Activated CD4-positive, alpha-beta T cell treated with anti-CD3 and anti-CD28 coated beads for 36 hours (primary cell): ENCODE measurements at regions of chr10 and their contacts with region 1.

Region 1: GRCh38 chr10:99435986-99436638 is 5.7 kb upstream of the GOT1 start:
- DNase-seq: no peak
- ATAC-seq: peak; percentile 60
- H3K4me3 Mint-ChIP-seq: no peak overlapping the region
- H3K27ac Mint-ChIP-seq: no peak overlapping the region
- H3K4me1 Mint-ChIP-seq: peaks cover 14% of the 10 kb centered on the region
- H3K27me3 Mint-ChIP-seq: no peaks in the 10 kb centered on the region

Region 2: GRCh38 chr10:99357691-99358090 is 78.4 kb before region 1 on chr10:
- CTCF ChIA-PET with region 1: no interaction called
- POLR2A ChIA-PET with region 1: no interaction called
- intact Hi-C with region 1: no loop called
- DNase-seq: no peak
- ATAC-seq: no peak
- H3K4me3 Mint-ChIP-seq: no peak overlapping the region
- H3K27ac Mint-ChIP-seq: no peak overlapping the region
- H3K4me1 Mint-ChIP-seq: no peaks in the 10 kb centered on the region
- H3K27me3 Mint-ChIP-seq: peaks cover 10% of the 10 kb centered on the region

Region 3: DNA sequence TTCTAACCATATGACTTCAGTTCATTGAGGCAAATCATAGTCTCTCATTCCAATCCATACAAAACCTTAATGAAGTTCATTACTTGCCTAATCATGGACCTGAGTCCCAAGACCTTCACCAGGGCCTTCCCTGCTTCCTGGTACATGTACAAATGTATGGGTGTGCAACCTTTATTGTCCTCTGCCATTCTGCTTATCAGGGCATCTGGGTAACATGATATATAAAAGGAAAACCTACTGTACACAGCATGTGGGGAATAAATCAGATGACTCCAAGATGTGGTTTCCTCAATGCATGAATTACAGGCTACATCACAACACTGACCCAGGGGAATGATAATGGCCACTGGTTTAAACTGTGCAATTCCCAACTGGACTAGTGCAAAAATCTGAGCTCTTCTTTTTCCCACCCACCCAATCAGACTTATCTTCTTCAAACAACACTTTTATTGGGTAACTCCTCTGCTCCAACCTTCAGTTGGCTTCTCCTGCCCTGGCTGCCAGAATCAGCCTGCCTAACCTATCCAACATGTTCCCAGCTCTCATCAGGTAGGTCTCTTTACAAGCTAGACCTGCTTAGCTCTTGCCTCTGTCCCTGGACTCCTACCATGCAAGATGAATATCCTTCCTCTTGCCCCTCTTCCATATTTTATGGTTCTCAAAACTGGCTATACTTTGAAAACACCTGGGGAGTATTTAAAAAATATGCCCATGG is 17.0 kb before region 1 on chr10:
- CTCF ChIA-PET with region 1: interaction called, 11 read pairs
- POLR2A ChIA-PET with region 1: no interaction called
- intact Hi-C with region 1: no loop called
- DNase-seq: no peak
- ATAC-seq: no peak
- H3K4me3 Mint-ChIP-seq: no peak overlapping the region
- H3K27ac Mint-ChIP-seq: no peak overlapping the region
- H3K4me1 Mint-ChIP-seq: no peaks in the 10 kb centered on the region
- H3K27me3 Mint-ChIP-seq: no peaks in the 10 kb centered on the region

Region 4: DNA sequence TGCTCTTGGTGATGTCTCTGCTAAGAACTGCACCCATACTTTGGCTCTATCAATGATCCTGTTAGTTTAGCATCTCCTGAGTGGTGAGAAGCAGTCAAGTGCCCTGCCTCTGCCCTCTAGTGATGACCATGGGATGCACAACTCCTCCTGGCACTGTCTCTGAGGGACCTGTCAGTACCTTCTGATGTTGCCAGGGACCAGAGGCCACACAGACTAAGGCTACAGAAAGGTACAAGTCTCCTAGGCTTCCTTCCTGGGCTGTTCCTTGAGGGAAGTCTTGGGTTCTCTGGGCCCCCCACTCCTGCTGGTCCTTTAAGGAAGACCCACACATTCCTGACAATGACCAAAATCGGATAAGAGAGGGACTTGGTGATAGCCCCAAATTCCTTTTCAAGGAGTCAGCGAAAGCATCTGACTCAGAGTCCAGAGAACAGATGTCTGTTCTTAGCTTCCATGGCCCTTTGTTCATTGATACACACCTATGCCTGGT is 112.0 kb after region 1 on chr10:
- CTCF ChIA-PET with region 1: interaction called, 13 read pairs
- POLR2A ChIA-PET with region 1: no interaction called
- intact Hi-C with region 1: loop called (anchors 2 to 5 kb)
- DNase-seq: peak; percentile 48
- ATAC-seq: peak; percentile 65
- H3K4me3 Mint-ChIP-seq: no peak overlapping the region
- H3K27ac Mint-ChIP-seq: no peak overlapping the region
- H3K4me1 Mint-ChIP-seq: no peaks in the 10 kb centered on the region
- H3K27me3 Mint-ChIP-seq: peaks cover 36% of the 10 kb centered on the region

Region 5: DNA sequence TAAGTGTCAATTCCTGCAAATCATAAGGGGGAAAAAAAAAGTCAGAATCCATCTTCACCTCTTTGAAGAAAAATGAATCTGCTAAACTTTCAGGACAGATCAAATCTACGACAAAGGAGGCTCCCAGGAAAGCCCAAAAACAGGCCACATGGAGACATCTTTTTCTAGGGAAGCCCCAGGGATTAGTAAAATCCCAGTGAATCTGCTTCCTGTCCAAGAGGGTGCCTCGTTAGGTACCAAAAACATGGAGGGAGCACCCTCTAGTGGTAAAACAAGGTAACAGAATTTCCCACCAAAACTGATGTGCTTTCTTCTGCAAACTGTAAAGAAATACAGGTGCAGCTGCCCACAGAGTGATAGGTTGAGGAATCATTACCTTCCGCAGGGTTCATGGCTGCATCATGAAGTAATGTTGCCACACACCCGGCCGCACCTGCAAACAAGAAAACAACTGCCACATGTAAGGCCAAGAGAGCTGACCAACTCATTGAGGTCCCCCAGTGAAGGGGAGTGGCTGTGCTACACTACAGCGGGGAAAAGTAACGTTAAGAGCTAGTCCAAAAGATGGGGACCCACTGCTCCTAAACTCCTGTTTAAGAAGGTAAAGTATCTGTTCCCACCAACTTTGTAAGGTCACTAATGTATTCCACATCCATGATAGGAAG is 176.2 kb after region 1 on chr10:
- CTCF ChIA-PET with region 1: interaction called, 26 read pairs
- POLR2A ChIA-PET with region 1: no interaction called
- intact Hi-C with region 1: loop called in 1 of 2 experiments (anchors 1 kb)
- DNase-seq: peak; percentile 28
- ATAC-seq: peak; percentile 31
- H3K4me3 Mint-ChIP-seq: no peak overlapping the region
- H3K27ac Mint-ChIP-seq: peak overlapping the region; percentile 30
- H3K4me1 Mint-ChIP-seq: peaks cover 37% of the 10 kb centered on the region
- H3K27me3 Mint-ChIP-seq: no peaks in the 10 kb centered on the region

Region 6: DNA sequence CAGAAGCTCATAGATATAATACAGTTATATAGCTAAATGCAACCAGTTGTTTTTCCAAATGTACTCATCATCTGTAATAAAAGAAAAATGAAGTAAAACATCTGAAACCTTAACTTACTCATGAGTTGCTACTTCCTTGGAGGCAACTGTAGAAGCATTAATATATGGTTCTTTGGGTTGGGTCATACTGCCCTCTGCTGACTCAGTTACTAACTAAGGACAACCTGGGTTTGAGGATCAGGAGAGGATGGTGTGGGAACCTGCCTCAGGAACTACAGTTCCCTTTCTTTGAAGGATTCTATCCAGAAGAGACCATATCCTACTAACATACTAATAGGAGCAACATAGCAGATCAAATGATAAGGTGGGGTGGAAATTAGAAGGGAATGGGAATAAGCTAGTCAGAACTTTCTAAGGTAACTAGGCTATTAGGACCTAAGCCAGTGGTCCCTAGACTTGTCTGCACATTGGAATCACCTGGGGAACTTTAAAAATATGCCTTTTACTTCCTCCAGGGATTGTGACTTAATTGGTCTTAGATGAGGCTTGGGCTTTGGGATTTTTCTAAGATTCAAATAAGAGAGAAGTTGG is 275.1 kb after region 1 on chr10:
- CTCF ChIA-PET with region 1: interaction called, 6 read pairs
- POLR2A ChIA-PET with region 1: no interaction called
- intact Hi-C with region 1: loop called in 1 of 2 experiments (anchors 1 kb)
- DNase-seq: peak; percentile 57
- ATAC-seq: peak; percentile 63
- H3K4me3 Mint-ChIP-seq: no peak overlapping the region
- H3K27ac Mint-ChIP-seq: no peak overlapping the region
- H3K4me1 Mint-ChIP-seq: peaks cover 15% of the 10 kb centered on the region
- H3K27me3 Mint-ChIP-seq: no peaks in the 10 kb centered on the region

Region 7: GRCh38 chr10:99930731-99931550 is 494.8 kb after region 1 on chr10:
- CTCF ChIA-PET with region 1: no interaction called
- POLR2A ChIA-PET with region 1: no interaction called
- intact Hi-C with region 1: no loop called
- DNase-seq: no peak
- ATAC-seq: peak; percentile 51
- H3K4me3 Mint-ChIP-seq: no peak overlapping the region
- H3K27ac Mint-ChIP-seq: no peak overlapping the region
- H3K4me1 Mint-ChIP-seq: peaks cover 17% of the 10 kb centered on the region
- H3K27me3 Mint-ChIP-seq: no peaks in the 10 kb centered on the region